ENCODE measurements at regions of chr14 and their contacts with region 1.

Region 1: GRCh38 chr14:65412032-65412846 is at the start of gene FUT8:
- DNase-seq: peak; percentile 95
- H3K4me3 Mint-ChIP-seq: peak within 1 kb of the TSS; percentile 94
- H3K27ac Mint-ChIP-seq: peak within 1 kb of the TSS; percentile 93
- H3K4me1 Mint-ChIP-seq: peaks cover 18% of the 10 kb centered on the region
- H3K27me3 Mint-ChIP-seq: no peaks in the 10 kb centered on the region
- CTCF ChIP-seq: peak; percentile 59
- total RNA-seq, gene FUT8: 11.8 and 17.1 TPM in 2 replicates

Region 2: DNA sequence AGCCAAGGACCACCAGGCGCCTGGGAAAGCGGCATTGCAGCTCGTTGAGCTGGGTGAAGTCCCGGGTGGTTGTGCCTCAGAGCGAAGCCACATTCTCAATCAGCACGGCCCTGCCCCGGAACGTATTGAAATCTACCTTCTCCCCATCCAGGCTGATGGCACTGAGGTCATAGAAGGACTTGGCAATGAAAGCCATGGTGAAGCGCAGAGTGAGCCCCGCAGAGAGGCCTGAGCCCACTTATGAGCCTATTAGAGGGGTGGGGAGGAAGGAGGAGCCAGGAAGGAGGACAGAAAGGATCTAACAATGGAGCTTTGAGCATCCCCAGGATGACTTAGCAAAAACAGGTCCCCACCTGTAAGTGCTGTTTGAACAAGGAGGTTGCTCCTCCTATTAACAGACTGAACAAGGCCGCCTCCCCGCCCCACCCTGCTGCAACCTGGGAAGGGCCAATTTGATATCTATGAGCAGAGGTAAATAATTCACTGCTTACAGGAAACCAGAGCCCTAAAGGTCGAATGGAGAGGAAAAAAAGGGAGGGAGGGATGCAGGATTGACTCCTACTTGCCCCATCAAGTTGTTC is 469.6 kb before region 1 on chr14 and contains the start of gene GPX2:
- CTCF ChIA-PET with region 1: no interaction called
- POLR2A ChIA-PET with region 1: no interaction called
- intact Hi-C with region 1: no loop called
- DNase-seq: no peak
- H3K4me3 Mint-ChIP-seq: no peak within 1 kb of the TSS
- H3K27ac Mint-ChIP-seq: peak within 1 kb of the TSS; percentile 22
- H3K4me1 Mint-ChIP-seq: no peaks in the 10 kb centered on the region
- H3K27me3 Mint-ChIP-seq: no peaks in the 10 kb centered on the region
- CTCF ChIP-seq: no peak
- total RNA-seq, gene GPX2: not detected in 2 replicates

Region 3: GRCh38 chr14:65102441-65103149 is 309.6 kb before region 1 on chr14 and contains the start of gene MAX:
- CTCF ChIA-PET with region 1: interaction called, 3 read pairs
- POLR2A ChIA-PET with region 1: interaction called, 5 read pairs
- intact Hi-C with region 1: loop called (anchors 1 kb)
- DNase-seq: peak; percentile 98
- H3K4me3 Mint-ChIP-seq: peak within 1 kb of the TSS; percentile 74
- H3K27ac Mint-ChIP-seq: peak within 1 kb of the TSS; percentile 94
- H3K4me1 Mint-ChIP-seq: peaks cover 17% of the 10 kb centered on the region
- H3K27me3 Mint-ChIP-seq: no peaks in the 10 kb centered on the region
- CTCF ChIP-seq: no peak
- total RNA-seq, gene MAX: 116 and 125 TPM in 2 replicates

Region 4: GRCh38 chr14:65179918-65180724 is 232.1 kb before region 1 on chr14:
- CTCF ChIA-PET with region 1: interaction called, 4 read pairs
- POLR2A ChIA-PET with region 1: interaction called, 10 read pairs
- intact Hi-C with region 1: no loop called
- DNase-seq: peak; percentile 90
- H3K4me3 Mint-ChIP-seq: no peak overlapping the region
- H3K27ac Mint-ChIP-seq: peak overlapping the region; percentile 47
- H3K4me1 Mint-ChIP-seq: peaks cover 27% of the 10 kb centered on the region
- H3K27me3 Mint-ChIP-seq: no peaks in the 10 kb centered on the region
- CTCF ChIP-seq: no peak

Region 5: GRCh38 chr14:65287264-65288131 is 124.7 kb before region 1 on chr14:
- CTCF ChIA-PET with region 1: no interaction called
- POLR2A ChIA-PET with region 1: interaction called, 3 read pairs
- intact Hi-C with region 1: loop called (anchors 5 kb)
- DNase-seq: no peak
- H3K4me3 Mint-ChIP-seq: no peak overlapping the region
- H3K27ac Mint-ChIP-seq: no peak overlapping the region
- H3K4me1 Mint-ChIP-seq: peaks cover 6% of the 10 kb centered on the region
- H3K27me3 Mint-ChIP-seq: no peaks in the 10 kb centered on the region
- CTCF ChIP-seq: no peak

Region 6: GRCh38 chr14:65431236-65431635 is 19.0 kb after region 1 on chr14:
- CTCF ChIA-PET with region 1: interaction called, 24 read pairs
- POLR2A ChIA-PET with region 1: no interaction called
- intact Hi-C with region 1: no loop called
- DNase-seq: no peak
- H3K4me3 Mint-ChIP-seq: no peak overlapping the region
- H3K27ac Mint-ChIP-seq: no peak overlapping the region
- H3K4me1 Mint-ChIP-seq: peaks cover 29% of the 10 kb centered on the region
- H3K27me3 Mint-ChIP-seq: no peaks in the 10 kb centered on the region
- CTCF ChIP-seq: no peak

Region 7: DNA sequence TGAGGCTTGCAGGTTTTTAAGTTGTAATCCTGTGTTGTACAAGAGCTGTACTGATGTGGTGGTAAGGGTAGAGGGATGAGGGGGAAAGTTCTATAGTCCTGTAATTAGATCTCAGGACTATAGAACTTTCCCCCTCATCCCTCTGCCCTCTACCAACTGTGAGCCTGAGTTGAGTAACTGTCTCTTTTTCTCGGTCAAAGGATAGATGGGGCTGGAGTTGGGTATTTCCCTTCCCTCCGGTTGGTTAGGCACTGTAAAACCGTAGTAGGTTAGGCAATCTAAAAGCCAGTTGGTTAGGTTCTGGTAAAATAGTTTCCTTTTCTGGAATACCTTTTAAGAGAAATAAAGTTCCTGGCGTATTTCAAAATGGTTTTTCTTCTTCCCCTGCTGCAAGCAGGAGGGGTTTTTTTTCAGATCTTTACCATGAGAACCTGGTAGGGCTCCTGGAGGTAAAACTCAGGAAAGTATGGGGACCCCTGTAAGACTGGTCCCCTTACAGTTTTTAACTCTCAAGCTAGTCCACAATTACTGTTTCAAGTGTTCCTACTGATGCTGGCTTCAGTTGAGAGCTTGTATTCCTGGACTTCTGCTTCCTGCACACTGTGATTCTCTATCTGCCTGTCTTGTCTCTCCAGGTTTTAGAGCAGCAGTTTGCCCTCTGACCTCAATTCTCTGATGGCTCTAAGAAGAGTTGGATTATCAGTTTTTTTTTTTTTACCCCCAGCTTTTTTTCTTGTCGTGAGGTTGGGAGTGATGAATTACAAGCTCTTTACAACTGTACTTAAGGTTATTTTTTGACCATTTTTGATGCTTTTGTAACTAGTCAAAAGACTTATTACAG is 59.0 kb after region 1 on chr14:
- CTCF ChIA-PET with region 1: no interaction called
- POLR2A ChIA-PET with region 1: no interaction called
- intact Hi-C with region 1: no loop called
- DNase-seq: no peak
- H3K4me3 Mint-ChIP-seq: no peak overlapping the region
- H3K27ac Mint-ChIP-seq: no peak overlapping the region
- H3K4me1 Mint-ChIP-seq: no peaks in the 10 kb centered on the region
- H3K27me3 Mint-ChIP-seq: no peaks in the 10 kb centered on the region
- CTCF ChIP-seq: no peak

Region 8: DNA sequence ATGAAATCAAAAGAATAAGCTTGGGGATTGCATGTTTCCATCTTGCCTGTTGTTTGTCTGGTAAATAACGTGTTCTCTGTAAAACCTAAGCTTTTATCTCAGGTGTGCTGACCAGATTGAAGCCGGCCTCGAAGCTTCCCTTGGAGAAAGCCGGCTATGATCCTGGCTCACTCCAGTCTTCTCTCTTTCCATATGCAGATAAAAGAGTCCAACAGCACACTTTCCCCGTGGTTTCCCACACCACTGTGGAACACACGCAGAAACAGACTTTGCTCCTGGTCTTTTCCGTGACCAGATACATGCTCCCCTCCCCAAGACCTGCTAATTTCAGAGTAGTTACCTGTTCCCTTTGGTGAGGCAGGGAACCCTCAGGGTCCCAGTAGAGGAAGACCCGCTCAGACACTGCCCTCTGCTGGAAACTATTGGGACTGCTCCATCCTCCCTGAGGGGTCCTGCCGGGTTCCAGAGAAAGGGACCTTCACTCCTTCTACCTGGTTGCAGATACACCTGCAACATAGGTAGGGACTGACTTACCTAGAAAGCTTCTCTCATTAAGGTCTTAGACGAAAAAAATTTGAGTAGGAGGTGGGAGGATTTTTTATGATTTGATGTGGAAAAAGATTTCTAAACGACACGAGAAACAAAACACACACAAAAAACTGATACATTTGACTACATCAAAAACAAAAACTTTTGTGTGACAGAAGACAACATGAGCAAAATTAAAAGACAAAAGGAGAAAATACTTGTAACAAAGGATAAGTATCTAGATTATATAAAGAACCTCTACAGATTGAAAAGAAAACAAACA is 658.5 kb after region 1 on chr14:
- CTCF ChIA-PET with region 1: interaction called, 10 read pairs
- POLR2A ChIA-PET with region 1: no interaction called
- intact Hi-C with region 1: loop called (anchors 2 kb)
- DNase-seq: peak; percentile 62
- H3K4me3 Mint-ChIP-seq: no peak overlapping the region
- H3K27ac Mint-ChIP-seq: no peak overlapping the region
- H3K4me1 Mint-ChIP-seq: peaks cover 15% of the 10 kb centered on the region
- H3K27me3 Mint-ChIP-seq: peaks cover 25% of the 10 kb centered on the region
- CTCF ChIP-seq: peak; percentile 84